ENCODE measurements at regions of chr1 and their contacts with region 1.

Region 1: GRCh38 chr1:113042285-113043143 is 30.5 kb upstream of the LRIG2 start:
- DNase-seq: peak; percentile 62 to 66
- H3K4me3 ChIP-seq: no peak overlapping the region
- H3K27ac ChIP-seq: no peak overlapping the region
- H3K4me1 ChIP-seq: no peaks in the 10 kb centered on the region
- H3K27me3 ChIP-seq: no peaks in the 10 kb centered on the region
- CTCF ChIP-seq: peak; percentile 62 to 75 (median 68)
- POLR2A ChIP-seq: no peak

Region 2: DNA sequence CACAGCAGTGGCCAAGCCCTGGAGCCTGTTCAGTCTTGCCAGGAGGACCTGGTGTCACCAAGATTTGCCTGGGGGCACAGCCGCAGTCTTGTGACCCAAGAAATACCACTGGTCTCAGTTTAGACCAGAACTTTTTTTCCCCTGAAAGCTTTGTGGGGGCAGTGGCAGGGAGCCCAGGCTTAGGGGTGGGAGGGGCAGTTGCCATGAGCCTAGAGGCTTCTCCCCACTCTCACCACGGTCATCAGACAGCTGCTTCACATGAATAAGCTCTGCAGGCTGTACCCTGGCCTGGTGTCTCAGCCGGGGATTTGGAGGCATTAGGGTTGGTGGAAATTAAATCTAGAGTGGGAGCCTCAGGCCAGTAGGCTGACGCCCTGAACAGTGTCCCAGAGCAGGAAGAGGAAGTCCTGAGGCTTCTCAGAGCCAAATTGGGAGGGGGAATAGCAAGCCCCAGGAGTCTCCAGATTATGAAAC is 160.2 kb before region 1 on chr1:
- intact Hi-C with region 1: loop called (anchors 10 kb)
- DNase-seq: peak in 1 of 2 donors; percentile 19
- H3K4me3 ChIP-seq: no peak overlapping the region
- H3K27ac ChIP-seq: peak overlapping the region; percentile 40 to 71
- H3K4me1 ChIP-seq: no peaks in the 10 kb centered on the region
- H3K27me3 ChIP-seq: no peaks in the 10 kb centered on the region
- CTCF ChIP-seq: no peak
- POLR2A ChIP-seq: no peak